A549 (cell line): ENCODE measurements at regions of chr19 and their contacts with region 1.

Region 1: GRCh38 chr19:45615795-45616708 is 14.0 kb upstream of the GPR4 start:
- DNase-seq: peak; percentile 96 to 97
- ATAC-seq: peak; percentile 62 to 84
- H3K4me3 ChIP-seq: no peak overlapping the region
- H3K27ac ChIP-seq: peak overlapping the region; percentile 55 to 73
- H3K4me1 ChIP-seq: peaks cover 30% of the 10 kb centered on the region
- CTCF ChIP-seq: no peak
- EP300 ChIP-seq: no peak
- POLR2A ChIP-seq: no peak
- RAD21 ChIP-seq: no peak

Region 2: DNA sequence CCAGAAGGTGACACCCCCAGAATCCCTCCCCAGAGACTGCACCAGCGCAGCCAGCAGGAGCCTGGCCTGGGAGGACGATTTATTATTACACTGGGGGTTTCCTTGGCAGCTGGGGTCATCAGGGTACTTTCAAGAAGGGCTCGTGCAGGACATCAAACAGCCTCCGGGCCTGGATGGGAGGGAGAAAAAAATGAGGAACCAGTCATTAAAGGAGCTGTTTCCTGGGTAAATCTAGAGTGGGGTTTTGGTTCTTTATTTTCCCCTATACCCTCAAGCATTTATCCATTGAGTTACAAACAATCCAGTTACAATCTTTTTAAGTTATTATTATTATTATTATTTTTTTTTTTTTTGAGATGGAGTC is 206.5 kb before region 1 on chr19:
- CTCF ChIA-PET with region 1: no interaction called
- POLR2A ChIA-PET with region 1: no interaction called
- DNase-seq: no peak
- ATAC-seq: no peak
- H3K4me3 ChIP-seq: no peak overlapping the region
- H3K27ac ChIP-seq: 0 out of 6 replicates have a peak overlapping the region, but pooled peaks of 1 of the 2 experiments have one; percentile 3
- H3K4me1 ChIP-seq: peaks cover 11% of the 10 kb centered on the region
- CTCF ChIP-seq: no peak
- EP300 ChIP-seq: no peak
- POLR2A ChIP-seq: no peak
- RAD21 ChIP-seq: no peak

Region 3: GRCh38 chr19:45584332-45585157 is 31.5 kb before region 1 on chr19 and contains the start of gene OPA3:
- CTCF ChIA-PET with region 1: interaction called, 3 read pairs
- POLR2A ChIA-PET with region 1: interaction called, 11 read pairs
- DNase-seq: peak; percentile 100
- ATAC-seq: peak; percentile 92 to 94
- H3K4me3 ChIP-seq: peak within 1 kb of the TSS; percentile 61
- H3K27ac ChIP-seq: peak within 1 kb of the TSS; percentile 87 to 92
- H3K4me1 ChIP-seq: peaks cover 12% of the 10 kb centered on the region
- CTCF ChIP-seq: no peak
- EP300 ChIP-seq: no peak
- POLR2A ChIP-seq: peak; percentile 84
- RAD21 ChIP-seq: no peak; a peak in 2 of 5 replicates
- polyA plus RNA-seq, gene OPA3: 21.8 and 29.1 TPM in 2 replicates